Activated T-helper 1 cell treated with anti-CD3 and anti-CD28 coated beads, Interleukin-12 subunit alpha, Interleukin-12 subunit beta, Interleukin-2, Interleukin-4 antibody, amounts not matched to agents 30 ng/mL and 10 ng/mL and 1 ng/mL, durations not matched to agents 14 hours and 24 hours and 36 hours (primary cell): ENCODE measurements at regions of chr9 and their contacts with region 1.

Region 1: GRCh38 chr9:121399883-121400607 is 30.0 kb upstream of the STOM start:
- DNase-seq: no peak
- H3K4me3 Mint-ChIP-seq: no peak overlapping the region
- H3K27ac Mint-ChIP-seq: no peak overlapping the region
- H3K4me1 Mint-ChIP-seq: no peaks in the 10 kb centered on the region
- H3K27me3 Mint-ChIP-seq: peaks cover 22% of the 10 kb centered on the region

Region 2: DNA sequence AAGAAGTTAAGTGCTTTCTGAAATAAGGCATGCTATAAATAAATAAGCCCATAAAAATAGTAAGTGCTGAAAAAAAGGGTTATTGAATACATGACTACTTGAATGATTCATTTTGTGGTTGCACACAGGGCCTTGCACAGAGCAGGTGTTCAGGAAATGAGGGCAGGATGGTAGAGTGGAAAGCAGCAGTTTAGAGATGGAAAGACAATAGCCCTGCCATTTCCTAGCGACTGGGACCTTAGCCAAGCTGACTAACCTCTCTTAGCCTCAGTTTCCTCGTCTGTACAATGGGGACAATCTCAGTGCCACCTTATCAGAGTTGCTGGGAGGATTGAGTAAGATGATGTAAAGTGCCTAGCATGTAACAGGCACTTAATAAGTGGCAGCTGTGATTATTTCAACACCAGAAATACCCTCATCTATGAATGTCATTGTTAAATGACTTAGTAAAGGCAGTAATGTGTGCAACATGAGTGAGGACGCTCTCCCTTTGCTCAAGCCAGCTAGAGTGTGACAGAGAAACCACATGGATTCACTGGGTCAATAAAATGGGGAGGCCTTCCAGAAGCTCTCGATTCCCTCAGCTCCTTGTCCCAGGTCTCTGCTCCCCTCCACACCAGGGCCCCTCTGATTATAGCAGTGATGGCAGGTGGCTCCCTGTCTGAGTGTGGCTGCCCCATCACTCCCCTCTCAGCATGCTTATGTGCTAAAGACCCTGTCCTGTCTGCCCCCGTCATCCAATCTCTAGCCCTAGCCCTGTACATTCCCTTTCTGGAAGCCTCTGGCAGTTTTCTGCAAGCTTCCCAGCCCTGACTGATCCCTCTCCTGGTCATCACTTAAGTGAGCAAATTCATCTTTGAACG is 507.1 kb before region 1 on chr9:
- intact Hi-C with region 1: no loop called
- DNase-seq: peak; percentile 62
- H3K4me3 Mint-ChIP-seq: peak overlapping the region; percentile 69
- H3K27ac Mint-ChIP-seq: peak overlapping the region; percentile 99
- H3K4me1 Mint-ChIP-seq: peaks cover 74% of the 10 kb centered on the region
- H3K27me3 Mint-ChIP-seq: no peaks in the 10 kb centered on the region

Region 3: DNA sequence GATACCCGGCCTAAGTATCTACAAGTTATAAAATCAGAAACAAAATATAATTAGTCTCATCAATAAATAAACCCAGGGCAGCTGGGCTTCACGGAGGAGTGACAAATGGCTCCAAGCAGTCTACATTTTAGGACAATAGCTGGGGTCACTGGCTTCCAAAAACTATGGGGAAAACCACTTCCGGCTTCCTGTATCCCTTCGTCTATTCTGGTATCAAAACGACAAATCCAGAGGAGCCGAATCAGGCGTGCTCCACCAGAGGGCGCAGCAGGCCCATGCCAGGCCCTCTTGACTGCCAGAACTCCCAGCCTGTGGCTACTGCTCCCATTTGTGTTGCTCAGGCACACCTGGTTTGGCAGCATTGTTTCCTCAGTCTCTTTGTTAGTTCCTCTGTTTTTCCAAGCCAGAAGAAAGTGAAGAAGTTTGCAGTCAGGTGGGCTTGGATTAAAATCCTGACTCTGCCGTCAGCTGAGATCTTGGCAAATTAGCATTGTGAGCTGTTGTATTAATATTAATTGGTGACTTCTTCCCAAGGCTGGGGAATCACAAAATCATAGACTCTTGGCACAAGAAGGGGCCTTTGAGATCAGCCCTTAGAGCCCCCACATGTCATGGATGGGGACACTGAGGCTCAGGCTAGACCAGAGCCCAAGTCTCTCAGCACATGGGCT is 186.8 kb before region 1 on chr9:
- intact Hi-C with region 1: loop called (anchors 1 kb)
- DNase-seq: peak; percentile 49
- H3K4me3 Mint-ChIP-seq: no peak overlapping the region
- H3K27ac Mint-ChIP-seq: no peak overlapping the region
- H3K4me1 Mint-ChIP-seq: peaks cover 22% of the 10 kb centered on the region
- H3K27me3 Mint-ChIP-seq: peaks cover 3% of the 10 kb centered on the region

Region 4: GRCh38 chr9:121278535-121279261 is 121.3 kb before region 1 on chr9:
- intact Hi-C with region 1: loop called (anchors 1 kb)
- DNase-seq: peak; percentile 17
- H3K4me3 Mint-ChIP-seq: no peak overlapping the region
- H3K27ac Mint-ChIP-seq: no peak overlapping the region
- H3K4me1 Mint-ChIP-seq: peaks cover 6% of the 10 kb centered on the region
- H3K27me3 Mint-ChIP-seq: peaks cover 3% of the 10 kb centered on the region

Region 5: GRCh38 chr9:121350993-121351561 is 49.0 kb before region 1 on chr9:
- intact Hi-C with region 1: loop called (anchors 2 kb)
- DNase-seq: no peak
- H3K4me3 Mint-ChIP-seq: no peak overlapping the region
- H3K27ac Mint-ChIP-seq: no peak overlapping the region
- H3K4me1 Mint-ChIP-seq: peaks cover 46% of the 10 kb centered on the region
- H3K27me3 Mint-ChIP-seq: no peaks in the 10 kb centered on the region

Region 6: DNA sequence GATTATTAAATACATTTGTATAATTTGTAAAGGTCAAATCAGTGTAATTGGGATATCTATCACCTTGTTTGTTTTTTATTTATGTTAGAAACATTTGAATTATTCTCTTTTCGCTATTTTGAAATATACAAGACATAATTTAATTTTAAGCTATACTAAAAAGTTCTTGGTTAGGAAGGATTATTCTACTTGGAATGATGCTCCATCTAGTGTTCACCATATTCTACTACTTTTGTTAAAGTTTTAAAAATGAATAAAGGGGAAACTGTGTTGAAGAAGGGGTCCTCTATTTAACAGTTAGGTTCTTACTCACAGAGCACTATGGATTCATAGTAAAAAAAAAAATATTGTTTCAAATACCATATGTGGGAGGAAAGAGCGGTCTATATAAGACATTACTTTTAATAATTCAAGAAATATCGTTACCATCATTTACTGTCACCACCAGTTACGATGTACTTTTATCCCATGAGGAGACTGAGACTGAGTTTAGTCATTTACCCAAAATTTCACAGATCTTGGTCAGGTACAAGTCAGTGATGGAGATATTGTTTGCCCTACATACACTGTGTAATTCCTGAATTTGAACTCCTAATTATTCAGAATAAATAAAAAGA is 23.7 kb before region 1 on chr9:
- intact Hi-C with region 1: loop called (anchors 1 kb)
- DNase-seq: no peak
- H3K4me3 Mint-ChIP-seq: no peak overlapping the region
- H3K27ac Mint-ChIP-seq: no peak overlapping the region
- H3K4me1 Mint-ChIP-seq: peaks cover 21% of the 10 kb centered on the region
- H3K27me3 Mint-ChIP-seq: peaks cover 7% of the 10 kb centered on the region

Region 7: GRCh38 chr9:121455527-121456239 is 55.6 kb after region 1 on chr9:
- intact Hi-C with region 1: loop called (anchors 5 kb)
- DNase-seq: peak; percentile 24
- H3K4me3 Mint-ChIP-seq: peak overlapping the region; percentile 46
- H3K27ac Mint-ChIP-seq: peak overlapping the region; percentile 37
- H3K4me1 Mint-ChIP-seq: peaks cover 30% of the 10 kb centered on the region
- H3K27me3 Mint-ChIP-seq: peaks cover 25% of the 10 kb centered on the region